ENCODE measurements at regions of chr19 and their contacts with region 1.

Region 1: DNA sequence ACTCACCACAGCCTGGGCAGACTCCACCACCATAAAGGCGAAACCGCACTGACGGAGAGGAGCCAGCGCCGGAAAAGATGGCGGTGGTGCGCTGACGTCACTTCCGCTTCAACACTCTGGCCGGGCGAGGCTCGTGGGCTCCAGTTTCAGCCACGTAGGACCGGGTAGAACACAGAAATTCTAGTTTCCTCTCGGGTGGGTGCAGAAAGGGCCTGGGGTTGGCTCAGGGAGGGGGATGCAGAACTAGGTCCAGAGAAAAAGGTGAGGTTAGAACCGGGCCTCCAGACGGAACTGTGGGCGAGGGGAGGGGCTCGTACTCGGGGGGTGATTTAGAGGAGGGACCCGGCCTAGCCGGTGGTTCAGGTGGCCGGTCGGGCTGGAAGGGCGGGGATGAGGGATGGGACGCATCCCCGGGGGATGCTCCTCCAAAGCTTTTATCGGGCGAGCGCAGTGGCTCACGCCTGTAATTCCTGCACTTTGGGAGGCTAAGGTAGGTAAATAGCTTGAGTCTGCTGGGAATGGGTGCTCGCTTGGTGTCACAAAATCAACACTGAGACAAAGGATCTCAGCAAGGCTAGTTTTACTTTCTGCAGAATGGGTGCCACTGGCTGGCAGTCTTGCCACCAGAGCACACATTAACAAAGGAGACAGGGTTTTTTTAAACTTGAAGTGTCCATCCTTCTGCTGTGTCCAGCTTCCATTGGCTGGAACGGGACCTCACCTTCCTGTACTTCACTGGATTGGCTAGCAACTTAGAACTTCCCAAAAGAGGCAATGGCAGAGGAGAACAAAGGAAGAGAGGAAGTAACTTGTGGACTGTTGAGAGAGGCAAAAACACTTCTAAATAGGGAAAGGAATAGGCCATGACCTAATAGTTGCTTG is at the start of gene ZNF561:
- DNase-seq: peak; percentile 87 to 89
- ATAC-seq: peak; percentile 93 to 97 (median 96)
- H3K4me3 ChIP-seq: peak within 1 kb of the TSS; percentile 41 to 97 (median 84)
- H3K27ac ChIP-seq: peak within 1 kb of the TSS; percentile 79 to 98 (median 94)
- H3K4me1 ChIP-seq: peaks cover 3 to 40% (median 23%) of the 10 kb centered on the region in 9 donors
- H3K27me3 ChIP-seq: no peaks in the 10 kb centered on the region
- CTCF ChIP-seq: no peak
- total RNA-seq, gene ZNF561: 19.1 to 26.6 (median 23.7) TPM

Region 2: DNA sequence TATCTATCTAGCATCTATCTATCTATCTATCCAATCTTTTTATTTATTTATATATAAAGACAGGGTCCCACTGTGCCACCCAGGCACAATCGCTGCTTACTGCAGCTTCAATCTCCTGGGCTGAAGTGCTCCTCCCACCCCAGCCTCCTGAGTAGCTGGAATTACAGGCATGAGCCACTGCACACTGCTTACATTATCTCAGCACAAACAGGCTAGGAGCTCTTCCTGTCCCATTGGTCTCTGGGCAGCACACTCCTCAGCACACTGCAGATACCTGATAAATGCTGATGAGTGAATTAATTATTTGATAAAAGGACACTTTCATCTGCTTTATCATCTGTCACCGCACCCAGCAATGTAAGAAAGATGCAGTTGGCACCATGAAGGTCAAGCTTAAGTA is 37.4 kb after region 1 on chr19:
- intact Hi-C with region 1: no loop called
- DNase-seq: no peak
- ATAC-seq: no peak
- H3K4me3 ChIP-seq: no peak overlapping the region
- H3K27ac ChIP-seq: no peak overlapping the region
- H3K4me1 ChIP-seq: peaks cover 0 to 14% (median 0%) of the 10 kb centered on the region in 9 donors
- H3K27me3 ChIP-seq: no peaks in the 10 kb centered on the region
- CTCF ChIP-seq: no peak

Region 3: GRCh38 chr19:9674663-9675357 is 53.4 kb after region 1 on chr19 and contains the start of gene ZNF562:
- intact Hi-C with region 1: loop called in 4 of 10 experiments (anchors 2 to 10 kb)
- DNase-seq: peak; percentile 88 to 90
- ATAC-seq: peak; percentile 97 to 99 (median 98)
- H3K4me3 ChIP-seq: peak within 1 kb of the TSS; percentile 55 to 93 (median 74)
- H3K27ac ChIP-seq: peak within 1 kb of the TSS; percentile 84 to 98 (median 96)
- H3K4me1 ChIP-seq: peaks cover 0 to 17% (median 4%) of the 10 kb centered on the region in 9 donors
- H3K27me3 ChIP-seq: no peaks in the 10 kb centered on the region
- CTCF ChIP-seq: no peak
- total RNA-seq, gene ZNF562: 18.8 to 24.3 (median 21.5) TPM

Region 4: DNA sequence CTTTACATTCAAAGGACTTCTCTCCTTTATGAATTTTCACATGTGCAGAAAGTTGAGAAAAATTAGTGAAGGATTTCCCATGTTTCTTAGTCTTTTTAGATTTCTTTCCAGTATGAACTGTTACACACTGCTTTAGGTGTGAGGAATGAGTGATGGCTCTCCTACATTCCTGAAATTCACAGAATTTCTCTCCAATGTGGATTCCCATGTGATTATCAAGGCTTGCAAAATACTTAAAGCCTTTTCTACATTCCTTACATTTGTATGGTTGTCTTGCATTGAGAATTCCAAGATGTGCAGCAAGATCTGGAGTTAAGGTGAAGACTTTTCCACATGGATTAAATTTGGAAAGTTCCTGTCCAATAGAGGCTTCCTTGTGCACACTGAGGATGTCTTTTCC is 69.3 kb after region 1 on chr19:
- intact Hi-C with region 1: no loop called
- DNase-seq: no peak
- ATAC-seq: no peak
- H3K4me3 ChIP-seq: no peak overlapping the region
- H3K27ac ChIP-seq: no peak overlapping the region
- H3K4me1 ChIP-seq: no peaks in the 10 kb centered on the region
- H3K27me3 ChIP-seq: peaks cover 0 to 4% (median 0%) of the 10 kb centered on the region in 7 donors
- CTCF ChIP-seq: no peak

Region 5: GRCh38 chr19:9768175-9769112 is 147.0 kb after region 1 on chr19 and contains the start of gene ZNF846:
- intact Hi-C with region 1: loop called in 1 of 10 experiments (anchors 5 kb)
- DNase-seq: peak; percentile 91 to 94
- ATAC-seq: peak; percentile 98 to 100 (median 99)
- H3K4me3 ChIP-seq: peak within 1 kb of the TSS; percentile 55 to 90 (median 76)
- H3K27ac ChIP-seq: peak within 1 kb of the TSS; percentile 82 to 96 (median 93)
- H3K4me1 ChIP-seq: peaks cover 0 to 19% (median 14%) of the 10 kb centered on the region in 9 donors
- H3K27me3 ChIP-seq: no peaks in the 10 kb centered on the region
- CTCF ChIP-seq: no peak
- total RNA-seq, gene ZNF846: 6.2 to 16.2 (median 10.1) TPM

Measured in heart right ventricle (tissue), 16 donors.